CD4-positive, alpha-beta T cell (primary cell): ENCODE measurements at regions of chr6 and their contacts with region 1.

Region 1: DNA sequence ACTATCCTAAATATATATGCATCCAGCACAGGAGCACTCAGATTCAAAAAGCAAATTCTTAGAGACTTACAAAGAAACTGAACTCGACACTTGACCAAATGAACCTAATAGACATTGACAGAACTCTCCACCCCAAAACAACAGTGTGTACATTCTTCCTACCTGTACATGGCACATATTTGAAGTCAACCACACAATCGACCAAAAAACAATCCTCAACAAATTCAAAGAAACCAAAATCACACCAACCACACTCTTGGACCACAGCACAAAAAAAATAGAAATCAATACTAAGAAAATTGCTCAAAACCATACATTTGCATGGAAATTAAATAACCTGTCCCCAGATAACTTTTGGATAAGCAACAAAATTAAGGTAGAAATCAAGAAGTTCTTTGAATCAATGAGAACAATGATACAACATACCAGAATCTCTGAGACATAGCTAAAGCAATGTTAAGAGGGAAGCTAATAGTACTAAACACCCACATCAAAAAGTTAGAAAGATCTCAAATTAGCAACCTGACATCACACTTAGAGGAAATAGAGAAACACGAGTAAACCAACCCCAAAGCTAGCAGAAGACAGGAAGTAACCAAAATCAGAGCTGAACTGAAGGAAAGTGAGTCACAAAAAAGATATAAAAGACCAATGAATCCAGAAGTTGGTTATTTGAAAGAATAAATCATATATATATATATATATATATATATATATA is 12.5 kb upstream of the TREM1 start:
- DNase-seq: peak in 3 of 14 experiments; percentile 73 to 85 (median 75)
- ATAC-seq: peak; percentile 94
- H3K4me3 ChIP-seq: no peak overlapping the region
- H3K4me3 Mint-ChIP-seq: peak overlapping the region; percentile 23
- H3K27ac ChIP-seq: peak overlapping the region in 1 of 2 donors; percentile 13
- H3K27ac Mint-ChIP-seq: peak overlapping the region; percentile 57
- H3K4me1 ChIP-seq: peaks cover 7% of the 10 kb centered on the region
- H3K4me1 Mint-ChIP-seq: peaks cover 51% of the 10 kb centered on the region
- H3K27me3 ChIP-seq: no peaks in the 10 kb centered on the region
- H3K27me3 Mint-ChIP-seq: no peaks in the 10 kb centered on the region
- CTCF ChIP-seq: no peak

Region 2: DNA sequence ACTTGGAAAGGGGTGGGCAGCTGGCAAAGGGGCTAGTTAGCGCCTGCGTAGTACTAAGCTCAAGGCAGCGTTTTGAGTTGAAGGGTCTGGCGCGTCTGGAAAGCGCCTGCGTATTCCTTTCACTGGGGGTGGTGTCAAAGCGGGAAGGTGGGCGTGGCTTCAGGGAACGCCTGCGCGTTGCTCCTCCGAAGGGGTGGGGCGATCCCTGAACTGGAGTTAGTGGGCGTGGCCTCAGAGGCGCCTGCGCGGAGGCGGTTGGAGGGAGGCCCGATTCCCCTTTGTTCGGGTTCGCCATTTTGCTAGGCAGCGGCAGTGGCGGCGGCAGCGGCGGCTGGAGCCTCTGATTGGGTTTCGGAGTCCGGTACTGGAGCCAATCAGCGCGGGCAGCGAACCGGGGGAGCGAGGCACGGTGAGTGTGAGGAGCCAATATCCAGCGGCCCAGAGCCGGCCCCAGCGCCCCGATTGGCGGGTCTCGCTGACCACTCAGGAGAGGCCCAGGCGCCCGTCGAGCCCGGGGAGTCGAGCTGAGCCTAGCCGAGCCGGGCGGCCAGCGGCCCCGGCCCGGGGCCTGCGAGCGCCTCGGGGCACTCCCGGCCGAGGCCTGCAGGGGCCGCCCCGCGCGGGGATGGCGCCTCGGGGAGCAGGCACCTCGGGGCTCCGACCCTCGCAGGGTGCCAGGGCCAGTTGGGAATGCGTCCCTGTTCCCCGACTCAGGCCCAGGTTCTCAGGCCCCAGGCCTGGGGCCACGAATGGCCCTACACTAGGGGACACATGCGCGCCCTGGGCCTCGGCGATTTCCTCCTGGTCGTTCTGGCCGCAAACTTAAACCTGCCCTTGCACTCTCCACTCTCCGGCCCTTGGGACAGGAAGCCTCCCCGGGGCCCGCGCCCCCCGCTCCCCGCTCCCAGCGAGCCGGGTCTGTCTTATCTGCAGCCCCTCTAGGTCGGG is 226.0 kb before region 1 on chr6 and contains the start of gene NFYA:
- CTCF ChIA-PET with region 1: no interaction called
- POLR2A ChIA-PET with region 1: no interaction called
- intact Hi-C with region 1: loop called in 1 of 2 experiments (anchors 1 kb)
- DNase-seq: peak in 13 of 14 experiments; percentile 100
- ATAC-seq: peak; percentile 62
- H3K4me3 ChIP-seq: peak within 1 kb of the TSS; percentile 70
- H3K4me3 Mint-ChIP-seq: peak within 1 kb of the TSS; percentile 93
- H3K27ac ChIP-seq: peak within 1 kb of the TSS; percentile 95 to 96
- H3K27ac Mint-ChIP-seq: peak within 1 kb of the TSS; percentile 88
- H3K4me1 ChIP-seq: peaks cover 23% of the 10 kb centered on the region
- H3K4me1 Mint-ChIP-seq: peaks cover 51% of the 10 kb centered on the region
- H3K27me3 ChIP-seq: no peaks in the 10 kb centered on the region
- H3K27me3 Mint-ChIP-seq: no peaks in the 10 kb centered on the region
- CTCF ChIP-seq: peak; percentile 33
- total RNA-seq, gene NFYA: 26.7 to 27.3 TPM

Region 3: GRCh38 chr6:41132254-41132653 is 166.7 kb before region 1 on chr6:
- CTCF ChIA-PET with region 1: no interaction called
- POLR2A ChIA-PET with region 1: no interaction called
- intact Hi-C with region 1: no loop called
- DNase-seq: no peak
- ATAC-seq: no peak
- H3K4me3 ChIP-seq: no peak overlapping the region
- H3K4me3 Mint-ChIP-seq: no peak overlapping the region
- H3K27ac ChIP-seq: no peak overlapping the region
- H3K27ac Mint-ChIP-seq: no peak overlapping the region
- H3K4me1 ChIP-seq: no peaks in the 10 kb centered on the region
- H3K4me1 Mint-ChIP-seq: no peaks in the 10 kb centered on the region
- H3K27me3 ChIP-seq: no peaks in the 10 kb centered on the region
- H3K27me3 Mint-ChIP-seq: no peaks in the 10 kb centered on the region
- CTCF ChIP-seq: no peak

Region 4: GRCh38 chr6:41278699-41279405 is 20.1 kb before region 1 on chr6:
- CTCF ChIA-PET with region 1: no interaction called
- POLR2A ChIA-PET with region 1: interaction called, 3 read pairs
- intact Hi-C with region 1: loop called in 1 of 2 experiments (anchors 1 kb)
- DNase-seq: peak; percentile 39 to 85 (median 56)
- ATAC-seq: peak; percentile 71
- H3K4me3 ChIP-seq: no peak overlapping the region
- H3K4me3 Mint-ChIP-seq: peak overlapping the region; percentile 18
- H3K27ac ChIP-seq: no peak overlapping the region
- H3K27ac Mint-ChIP-seq: no peak overlapping the region
- H3K4me1 ChIP-seq: peaks cover 6% of the 10 kb centered on the region
- H3K4me1 Mint-ChIP-seq: peaks cover 10% of the 10 kb centered on the region
- H3K27me3 ChIP-seq: no peaks in the 10 kb centered on the region
- H3K27me3 Mint-ChIP-seq: peaks cover 8% of the 10 kb centered on the region
- CTCF ChIP-seq: peak; percentile 46